ENCODE measurements at regions of chr17 and their contacts with region 1.

Region 1: GRCh38 chr17:75113798-75114551 is 4.2 kb downstream of the ARMC7 start:
- DNase-seq: peak; percentile 75
- H3K27ac ChIP-seq: peak overlapping the region; percentile 83
- CTCF ChIP-seq: peak; percentile 94

Region 2: GRCh38 chr17:75069783-75070182 is 44.2 kb before region 1 on chr17:
- CTCF ChIA-PET with region 1: interaction called, 40 read pairs
- POLR2A ChIA-PET with region 1: no interaction called
- DNase-seq: peak; percentile 54
- H3K27ac ChIP-seq: no peak overlapping the region
- CTCF ChIP-seq: peak; percentile 64

Region 3: GRCh38 chr17:75087558-75088453 is 26.2 kb before region 1 on chr17 and contains the start of gene SLC16A5:
- CTCF ChIA-PET with region 1: interaction called, 10 read pairs
- POLR2A ChIA-PET with region 1: no interaction called
- DNase-seq: peak; percentile 96
- H3K27ac ChIP-seq: peak within 1 kb of the TSS; percentile 98
- CTCF ChIP-seq: no peak

Region 4: DNA sequence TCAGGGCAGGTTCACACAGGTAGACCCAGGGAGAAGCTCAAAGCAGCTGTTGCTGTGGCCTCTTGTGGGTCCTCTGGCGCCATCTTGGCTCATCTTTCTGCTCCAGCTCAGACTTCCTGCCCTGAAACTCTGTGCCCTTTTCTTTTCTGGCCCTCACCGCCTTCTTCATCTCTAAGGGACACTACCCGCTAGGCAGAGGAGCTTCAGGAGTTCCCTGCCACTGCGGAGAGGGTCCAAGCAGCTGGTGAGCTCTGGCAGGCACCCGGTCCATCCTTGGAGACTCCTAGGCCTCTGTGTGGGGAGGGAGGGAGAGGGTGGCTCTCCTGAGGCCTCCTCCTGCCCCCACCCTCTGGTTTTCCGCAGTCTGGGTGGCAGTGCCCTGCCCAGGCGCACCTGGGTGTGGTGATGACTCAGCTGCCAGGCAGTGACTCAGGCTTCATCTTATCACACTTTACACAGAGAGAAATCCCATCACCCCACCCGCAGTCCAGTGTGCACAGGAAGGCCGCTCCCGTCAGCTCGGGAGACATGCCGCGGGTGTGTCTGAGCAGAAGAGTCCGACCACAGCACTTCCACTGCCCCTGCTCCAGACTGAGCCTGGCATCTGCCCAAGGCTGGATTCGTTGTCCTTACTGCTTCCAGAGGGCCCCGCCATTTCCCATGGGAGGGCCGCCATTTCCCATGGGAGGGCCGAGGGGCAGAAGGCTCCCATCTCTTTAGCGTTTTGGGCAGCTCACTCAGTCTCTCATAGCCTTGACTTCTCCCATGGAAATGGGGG is 10.3 kb after region 1 on chr17:
- CTCF ChIA-PET with region 1: interaction called, 23 read pairs
- POLR2A ChIA-PET with region 1: no interaction called
- DNase-seq: peak; percentile 96
- H3K27ac ChIP-seq: peak overlapping the region; percentile 100
- CTCF ChIP-seq: no peak

Region 5: GRCh38 chr17:75131280-75132017 is 17.5 kb after region 1 on chr17 and contains the start of gene NT5C:
- CTCF ChIA-PET with region 1: interaction called, 61 read pairs
- POLR2A ChIA-PET with region 1: interaction called, 6 read pairs
- DNase-seq: peak; percentile 68
- H3K27ac ChIP-seq: peak within 1 kb of the TSS; percentile 100
- CTCF ChIP-seq: peak; percentile 78

Region 6: DNA sequence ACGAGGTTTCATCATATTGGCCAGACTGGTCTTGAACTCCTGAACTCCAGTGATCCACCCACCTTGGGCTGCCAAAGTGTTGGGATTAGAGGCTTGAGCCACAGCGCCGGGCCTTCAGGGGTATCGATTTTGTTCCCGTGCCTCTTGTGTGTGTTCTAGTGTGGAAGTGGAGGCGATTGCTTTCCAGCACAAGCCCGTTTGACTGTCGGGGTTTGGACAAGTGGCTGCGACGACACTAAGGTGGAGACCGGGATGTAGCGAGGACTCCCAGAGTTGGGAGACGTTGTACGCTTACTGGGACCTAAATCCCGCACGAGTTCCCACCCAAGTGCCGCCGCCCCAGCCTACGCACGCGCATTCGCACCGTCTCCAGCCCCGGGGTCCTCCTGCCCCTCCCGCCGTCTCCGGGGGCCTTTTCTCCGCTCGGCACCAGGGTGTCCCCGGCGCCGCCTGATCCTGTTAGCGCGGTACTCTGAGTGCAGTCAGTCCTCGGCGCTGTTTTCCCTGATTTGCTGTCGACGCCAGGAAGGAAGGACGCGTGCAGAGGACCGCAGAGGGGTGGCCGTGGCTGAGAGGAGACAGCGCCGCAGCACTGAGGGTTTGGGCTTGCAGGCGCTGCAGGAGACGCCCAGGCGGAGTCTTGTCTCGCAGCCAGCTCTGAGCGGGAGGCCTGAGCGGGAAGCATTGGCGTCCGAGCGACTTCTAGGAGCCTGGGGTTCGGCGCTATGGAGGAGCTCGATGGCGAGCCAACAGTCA is 91.2 kb after region 1 on chr17 and contains the start of gene NUP85:
- CTCF ChIA-PET with region 1: interaction called, 21 read pairs
- POLR2A ChIA-PET with region 1: interaction called, 4 read pairs
- DNase-seq: peak; percentile 100
- H3K27ac ChIP-seq: peak within 1 kb of the TSS; percentile 98
- CTCF ChIP-seq: no peak

Measured in RWPE1 (cell line).